Astrocyte of the cerebellum (primary cell): ENCODE measurements at regions of chr17 and their contacts with region 1.

Region 1: DNA sequence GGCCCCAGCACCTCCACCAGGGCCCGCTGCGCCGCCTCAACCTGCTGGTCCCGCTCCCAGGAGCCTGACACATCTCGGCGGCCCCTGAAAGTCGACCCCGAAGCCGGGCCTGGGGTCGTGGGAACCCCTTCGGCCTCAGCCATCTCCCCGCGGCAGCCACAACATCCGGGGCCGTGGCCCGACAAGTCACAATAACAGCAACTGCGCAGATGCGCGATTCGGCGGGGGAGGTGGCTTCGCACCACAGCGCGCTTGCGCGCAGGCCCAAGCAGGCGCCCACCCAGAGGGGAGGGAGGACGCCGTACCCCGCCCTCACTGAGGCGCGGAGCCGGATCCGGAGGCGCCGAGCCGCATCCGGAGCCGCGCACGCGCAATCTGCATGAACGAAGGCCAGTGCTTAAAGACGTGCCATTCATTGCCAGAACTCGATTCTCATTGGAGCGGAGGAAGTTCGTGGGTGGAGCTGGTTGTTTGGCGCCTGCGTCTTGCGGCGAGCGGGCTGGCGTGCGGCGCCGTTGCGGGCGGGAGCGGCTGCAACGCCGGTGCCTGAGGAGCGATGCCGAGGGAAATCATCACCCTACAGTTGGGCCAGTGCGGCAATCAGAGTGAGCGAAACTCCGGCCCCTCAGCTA is at the starts of genes RETREG3 and TUBG1:
- DNase-seq: peak; percentile 99
- H3K4me3 ChIP-seq: peak within 1 kb of the TSS; percentile 83
- CTCF ChIP-seq: peak; percentile 53

Region 2: DNA sequence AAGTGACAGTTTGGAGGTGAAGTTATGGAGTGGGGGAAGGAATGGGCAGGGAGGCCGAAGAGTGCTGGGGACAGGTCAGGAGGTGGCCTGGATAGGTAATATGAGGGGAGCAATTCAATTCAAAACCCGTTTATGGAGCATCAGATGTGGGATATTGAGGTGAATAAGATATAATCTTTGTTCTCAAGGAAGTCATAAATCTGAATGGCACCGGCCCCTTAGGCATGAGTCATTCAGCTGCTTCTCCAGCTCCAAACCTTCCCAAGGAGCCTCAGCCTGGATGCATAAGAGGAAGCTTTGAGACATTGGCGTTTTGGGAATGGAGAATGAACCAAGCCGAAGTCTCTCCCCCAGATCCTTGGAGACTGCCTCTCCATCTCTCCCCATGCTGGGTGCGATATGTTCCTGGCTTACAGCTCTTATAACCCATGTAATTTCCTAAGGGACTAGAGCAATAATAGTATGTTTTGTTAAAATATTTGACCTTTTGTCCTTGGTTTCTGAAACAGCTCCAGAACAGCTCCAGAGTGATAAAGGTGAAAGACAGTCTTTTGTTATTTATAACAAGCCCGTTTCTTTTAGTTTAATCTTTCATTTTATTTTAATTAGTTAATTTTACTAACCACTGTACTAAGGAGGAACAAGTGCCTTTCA is 51.5 kb after region 1 on chr17:
- in situ Hi-C with region 1: loop called (anchors 5 kb)
- DNase-seq: no peak
- H3K4me3 ChIP-seq: no peak overlapping the region
- CTCF ChIP-seq: no peak